Activated B cell treated with CpG ODN at 0.5 μM for 24 hours (primary cell): ENCODE measurements at regions of chr4 and their contacts with region 1.

Region 1: DNA sequence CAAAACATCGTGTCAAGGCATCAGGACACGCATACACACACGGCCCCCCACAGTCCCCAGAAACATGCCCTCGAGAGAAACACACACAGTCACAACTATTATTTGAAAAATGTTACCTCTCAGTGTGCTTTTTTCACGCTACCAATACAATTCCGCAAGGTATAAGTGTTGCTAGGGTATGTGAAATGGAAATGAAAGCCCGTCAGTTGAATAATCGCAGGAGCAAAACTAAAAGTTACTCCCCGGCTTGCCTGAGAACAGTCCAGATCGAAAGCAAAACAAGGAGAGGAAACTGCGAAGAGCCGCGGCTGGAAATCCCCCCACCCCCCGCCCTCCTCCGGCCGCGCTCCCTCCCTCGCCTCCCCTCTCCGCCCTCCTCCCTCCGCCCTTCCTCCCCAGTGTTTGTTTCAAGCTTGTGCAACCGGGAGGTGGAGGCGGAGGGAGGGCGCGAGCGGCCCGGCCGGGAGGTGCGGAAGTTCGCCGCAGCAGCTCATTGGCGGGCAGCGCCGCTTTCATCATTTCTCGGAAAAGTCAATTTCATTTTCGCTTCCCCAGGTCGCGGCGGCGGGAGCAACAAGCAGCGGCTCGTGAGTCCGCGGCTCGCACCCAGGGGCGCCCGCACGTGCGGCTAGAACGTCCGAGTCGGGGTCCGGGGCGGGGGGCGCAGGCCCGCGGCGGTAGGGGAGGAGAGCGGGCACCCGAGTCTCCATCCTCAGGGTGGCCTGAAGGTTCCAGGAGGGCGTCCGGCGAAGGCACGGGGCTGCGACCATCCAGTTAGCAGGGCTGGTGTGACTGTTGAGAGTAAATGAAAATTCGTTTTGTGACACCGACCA is at the start of gene IRF2:
- DNase-seq: peak; percentile 86
- ATAC-seq: peak; percentile 80
- H3K4me3 Mint-ChIP-seq: peak within 1 kb of the TSS; percentile 94
- H3K27ac Mint-ChIP-seq: peak within 1 kb of the TSS; percentile 96
- H3K4me1 Mint-ChIP-seq: peaks cover 63% of the 10 kb centered on the region
- H3K27me3 Mint-ChIP-seq: no peaks in the 10 kb centered on the region
- CTCF ChIP-seq: no peak
- total RNA-seq, gene IRF2: 65.5 and 66.2 TPM in 2 replicates

Region 2: DNA sequence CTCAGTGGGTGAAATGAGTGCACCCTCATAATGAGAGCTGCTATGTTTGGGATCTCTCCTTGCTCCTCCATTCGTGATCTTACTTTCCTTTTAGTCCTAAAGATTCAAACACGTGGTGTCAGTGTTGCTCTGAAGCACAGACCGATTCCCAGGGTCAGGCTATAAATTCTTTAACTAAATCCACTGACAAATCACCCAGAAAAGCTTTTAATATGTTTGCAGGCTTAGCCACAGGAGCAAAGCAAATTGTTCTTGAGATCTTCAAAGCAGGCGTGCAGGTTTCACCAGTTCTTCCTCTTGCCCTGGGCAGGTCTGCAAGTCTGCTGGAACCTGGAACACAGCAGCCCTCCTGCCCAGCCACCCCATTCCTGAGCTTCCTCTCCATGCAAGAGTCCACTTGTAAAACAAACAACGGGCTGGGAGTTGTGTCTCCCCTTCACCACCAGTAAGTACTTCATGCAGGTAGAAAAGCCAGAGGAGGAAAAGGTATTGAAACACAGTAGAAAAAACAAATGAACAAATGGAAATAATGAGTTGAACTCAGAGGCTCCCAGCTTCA is 186.7 kb before region 1 on chr4:
- CTCF ChIA-PET with region 1: no interaction called
- POLR2A ChIA-PET with region 1: interaction called, 29 read pairs
- intact Hi-C with region 1: loop called (anchors 1 kb)
- DNase-seq: no peak
- ATAC-seq: no peak
- H3K4me3 Mint-ChIP-seq: peak overlapping the region; percentile 77
- H3K27ac Mint-ChIP-seq: peak overlapping the region; percentile 91
- H3K4me1 Mint-ChIP-seq: peaks cover 61% of the 10 kb centered on the region
- H3K27me3 Mint-ChIP-seq: no peaks in the 10 kb centered on the region
- CTCF ChIP-seq: no peak

Region 3: GRCh38 chr4:184384056-184384809 is 90.2 kb before region 1 on chr4:
- CTCF ChIA-PET with region 1: no interaction called
- POLR2A ChIA-PET with region 1: interaction called, 14 read pairs
- intact Hi-C with region 1: loop called (anchors 1 kb)
- DNase-seq: no peak
- ATAC-seq: peak; percentile 36
- H3K4me3 Mint-ChIP-seq: peak overlapping the region; percentile 72
- H3K27ac Mint-ChIP-seq: peak overlapping the region; percentile 79
- H3K4me1 Mint-ChIP-seq: peaks cover 88% of the 10 kb centered on the region
- H3K27me3 Mint-ChIP-seq: no peaks in the 10 kb centered on the region
- CTCF ChIP-seq: no peak

Region 4: DNA sequence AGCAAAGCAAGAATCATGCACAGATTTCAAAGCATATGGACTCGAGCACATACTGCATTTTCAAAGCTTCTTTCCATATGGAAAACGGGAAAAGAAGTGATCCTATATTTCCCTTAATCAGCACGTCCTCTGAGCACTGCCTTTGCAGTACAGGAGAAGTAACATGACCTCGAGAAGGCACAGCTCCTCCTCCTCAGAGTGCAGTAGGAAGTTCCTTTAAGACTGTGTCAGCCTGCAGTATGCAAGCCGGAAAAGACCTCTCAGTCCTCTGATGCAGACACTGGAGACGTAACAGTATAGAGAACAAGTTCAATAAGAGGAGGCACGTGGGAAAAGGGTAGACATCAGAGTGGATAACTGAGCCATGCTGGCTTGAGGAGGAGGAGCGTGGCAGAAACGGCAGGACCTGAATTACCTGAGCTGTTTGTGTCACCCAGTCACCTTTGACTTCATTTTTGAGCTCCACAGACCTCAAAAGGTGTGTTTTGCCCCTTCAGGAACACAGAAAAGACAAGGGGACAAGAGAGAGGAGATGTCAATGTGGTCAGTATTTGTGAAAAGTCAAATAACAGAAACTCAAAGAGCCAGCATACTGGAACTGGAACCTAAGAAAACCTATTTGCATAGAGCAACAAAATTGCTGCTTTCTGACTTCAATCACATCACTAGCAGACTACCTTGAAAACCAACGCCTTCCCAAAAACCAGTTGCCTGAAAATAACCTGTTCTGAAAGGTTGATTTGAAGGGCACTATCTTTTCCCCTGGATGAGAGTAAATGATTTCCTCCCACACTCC is 20.9 kb before region 1 on chr4:
- CTCF ChIA-PET with region 1: no interaction called
- POLR2A ChIA-PET with region 1: interaction called, 15 read pairs
- intact Hi-C with region 1: loop called (anchors 1 kb)
- DNase-seq: no peak
- ATAC-seq: peak; percentile 81
- H3K4me3 Mint-ChIP-seq: peak overlapping the region; percentile 65
- H3K27ac Mint-ChIP-seq: peak overlapping the region; percentile 87
- H3K4me1 Mint-ChIP-seq: peaks cover 91% of the 10 kb centered on the region
- H3K27me3 Mint-ChIP-seq: no peaks in the 10 kb centered on the region
- CTCF ChIP-seq: no peak

Region 5: DNA sequence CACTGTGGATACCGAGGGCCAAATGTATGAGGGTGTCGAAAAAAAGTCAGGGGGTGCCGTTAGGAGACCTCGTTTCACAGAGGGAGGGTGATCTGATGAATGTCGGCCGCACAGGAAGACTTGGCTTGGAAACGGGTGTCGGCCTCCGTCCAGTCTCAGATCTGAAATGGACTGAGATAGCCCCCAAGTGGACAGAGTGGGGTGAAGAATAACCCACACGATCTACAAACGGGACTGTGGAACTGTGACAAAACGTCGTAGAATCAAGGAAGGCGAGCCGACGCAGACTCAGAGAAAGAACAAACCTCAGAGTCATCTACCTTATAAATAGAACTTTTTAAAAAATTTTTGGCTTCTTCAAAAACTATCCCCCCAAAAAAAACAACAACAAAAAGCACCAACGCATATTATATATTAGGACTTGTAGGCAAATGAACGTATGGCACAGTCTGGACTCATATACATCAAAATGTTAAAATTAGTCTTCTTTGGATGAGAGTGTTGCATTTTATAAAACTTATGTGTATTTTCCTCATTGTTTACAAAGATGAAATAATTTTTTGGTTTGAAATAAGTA is 63.6 kb after region 1 on chr4:
- CTCF ChIA-PET with region 1: interaction called, 19 read pairs
- POLR2A ChIA-PET with region 1: interaction called, 160 read pairs
- intact Hi-C with region 1: loop called (anchors 1 kb)
- DNase-seq: peak; percentile 54
- ATAC-seq: peak; percentile 68
- H3K4me3 Mint-ChIP-seq: peak overlapping the region; percentile 96
- H3K27ac Mint-ChIP-seq: peak overlapping the region; percentile 100
- H3K4me1 Mint-ChIP-seq: peaks cover 49% of the 10 kb centered on the region
- H3K27me3 Mint-ChIP-seq: no peaks in the 10 kb centered on the region
- CTCF ChIP-seq: no peak

Region 6: DNA sequence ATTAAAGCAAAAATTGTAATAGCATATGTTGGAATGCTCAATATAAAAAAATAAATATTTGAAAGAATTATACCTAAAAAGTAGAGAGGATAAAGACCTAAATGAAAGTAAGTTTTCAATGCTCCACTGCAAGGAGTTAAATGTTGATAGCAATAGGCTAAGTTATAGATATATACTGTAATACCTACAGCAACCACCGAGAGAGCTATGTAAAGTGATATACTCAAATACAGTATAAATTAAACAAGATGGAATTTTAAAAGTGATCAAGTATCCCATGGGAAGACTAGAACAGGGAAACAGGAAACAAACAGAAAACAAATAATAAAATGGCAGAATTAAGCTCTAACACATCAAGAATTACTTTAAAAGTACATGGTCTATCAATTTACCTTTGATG is 100.8 kb after region 1 on chr4:
- CTCF ChIA-PET with region 1: no interaction called
- POLR2A ChIA-PET with region 1: no interaction called
- intact Hi-C with region 1: no loop called
- DNase-seq: no peak
- ATAC-seq: peak; percentile 34
- H3K4me3 Mint-ChIP-seq: no peak overlapping the region
- H3K27ac Mint-ChIP-seq: no peak overlapping the region
- H3K4me1 Mint-ChIP-seq: no peaks in the 10 kb centered on the region
- H3K27me3 Mint-ChIP-seq: no peaks in the 10 kb centered on the region
- CTCF ChIP-seq: no peak

Region 7: GRCh38 chr4:185209031-185209851 is 734.8 kb after region 1 on chr4 and contains the start of gene SNX25:
- CTCF ChIA-PET with region 1: no interaction called
- POLR2A ChIA-PET with region 1: no interaction called
- intact Hi-C with region 1: loop called (anchors 10 kb)
- DNase-seq: peak; percentile 94
- ATAC-seq: peak; percentile 83
- H3K4me3 Mint-ChIP-seq: peak within 1 kb of the TSS; percentile 95
- H3K27ac Mint-ChIP-seq: peak within 1 kb of the TSS; percentile 94
- H3K4me1 Mint-ChIP-seq: peaks cover 63% of the 10 kb centered on the region
- H3K27me3 Mint-ChIP-seq: no peaks in the 10 kb centered on the region
- CTCF ChIP-seq: no peak
- total RNA-seq, gene SNX25: 53.1 and 53.7 TPM in 2 replicates